ENCODE measurements at regions of chr3 and their contacts with region 1.

Region 1: DNA sequence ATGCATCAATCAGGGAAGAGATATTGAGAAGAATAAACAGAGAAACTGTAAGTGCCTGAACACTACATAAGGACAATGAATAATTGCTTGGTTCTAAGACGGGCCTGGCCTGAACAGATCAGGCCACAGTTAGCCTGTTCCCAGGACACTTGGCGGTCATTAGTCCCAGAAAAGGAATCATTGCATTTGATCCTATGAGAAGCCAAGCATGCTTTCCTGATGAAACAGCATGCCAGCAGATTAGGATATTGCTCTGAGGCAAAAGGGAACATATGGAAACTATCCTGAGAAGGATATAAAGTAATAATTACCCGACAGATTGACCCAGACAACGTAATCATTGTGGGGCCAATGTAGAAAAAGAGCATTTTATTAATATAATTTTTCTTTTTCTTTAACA is 51.9 kb downstream of the STRIT1 start:
- DNase-seq: peak; percentile 81
- ATAC-seq: peak; percentile 50
- H3K4me3 ChIP-seq: no peak overlapping the region
- H3K27ac ChIP-seq: peak overlapping the region; percentile 73; the same call in 1 of the 2 replicates
- H3K4me1 ChIP-seq: peaks cover 13% of the 10 kb centered on the region
- H3K27me3 ChIP-seq: no peaks in the 10 kb centered on the region
- CTCF ChIP-seq: no peak
- POLR2A ChIP-seq: no peak
- RAD21 ChIP-seq: no peak

Region 2: GRCh38 chr3:155088706-155089345 is 152.8 kb before region 1 on chr3:
- CTCF ChIA-PET with region 1: no interaction called
- POLR2A ChIA-PET with region 1: no interaction called
- dilution Hi-C with region 1: no loop called
- in situ Hi-C with region 1: no loop called
- intact Hi-C with region 1: loop called (anchors 5 kb)
- DNase-seq: peak; percentile 78
- ATAC-seq: peak; percentile 88
- H3K4me3 ChIP-seq: no peak overlapping the region
- H3K27ac ChIP-seq: peak overlapping the region; percentile 49; the same call in 1 of the 2 replicates
- H3K4me1 ChIP-seq: peaks cover 4% of the 10 kb centered on the region
- H3K27me3 ChIP-seq: no peaks in the 10 kb centered on the region
- CTCF ChIP-seq: no peak
- POLR2A ChIP-seq: no peak
- RAD21 ChIP-seq: no peak

Measured in IMR-90 (cell line).